ENCODE measurements at regions of chr9 and their contacts with region 1.

Region 1: GRCh38 chr9:105425841-105426436 is 21.9 kb upstream of the FSD1L start:
- DNase-seq: peak in 1 of 4 experiments; percentile 37
- ATAC-seq: peak; percentile 91
- H3K4me3 ChIP-seq: no peak overlapping the region
- H3K27ac ChIP-seq: no peak overlapping the region
- H3K4me1 ChIP-seq: no peaks in the 10 kb centered on the region
- H3K27me3 ChIP-seq: peaks cover 9 to 14% of the 10 kb centered on the region in 2 experiments; a peak in 4 of 5 replicates
- CTCF ChIP-seq: peak; percentile 26 to 75 (median 31); a peak in 3 of 6 replicates
- EP300 ChIP-seq: no peak
- POLR2A ChIP-seq: no peak
- RAD21 ChIP-seq: peak; percentile 58 to 86

Region 2: GRCh38 chr9:105342145-105342505 is 83.8 kb before region 1 on chr9:
- CTCF ChIA-PET with region 1: no interaction called
- POLR2A ChIA-PET with region 1: no interaction called
- in situ Hi-C with region 1: no loop called
- intact Hi-C with region 1: no loop called
- DNase-seq: no peak
- ATAC-seq: no peak
- H3K4me3 ChIP-seq: no peak overlapping the region
- H3K27ac ChIP-seq: no peak overlapping the region
- H3K4me1 ChIP-seq: no peaks in the 10 kb centered on the region
- H3K27me3 ChIP-seq: no peaks in the 10 kb centered on the region
- CTCF ChIP-seq: no peak
- EP300 ChIP-seq: no peak
- POLR2A ChIP-seq: no peak
- RAD21 ChIP-seq: no peak

Region 3: DNA sequence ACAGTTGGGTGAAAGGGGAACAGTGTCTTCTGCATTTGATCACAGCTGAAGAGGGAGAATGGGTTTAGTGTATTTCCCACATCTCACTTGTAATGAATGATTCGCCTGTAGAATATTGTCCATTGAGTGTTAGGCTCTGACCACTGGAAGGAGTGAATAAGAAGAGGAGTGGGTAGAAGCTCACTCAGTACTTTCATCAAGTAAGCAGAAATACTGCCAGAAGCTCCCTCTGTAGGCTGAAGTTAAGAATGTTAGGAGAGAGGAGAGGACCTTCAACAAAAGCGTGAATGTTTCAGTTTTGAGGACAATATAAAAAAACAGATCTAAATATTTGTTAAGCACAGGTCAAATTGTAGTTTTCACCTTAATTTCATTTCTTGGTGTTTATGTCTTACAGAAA is 49.4 kb after region 1 on chr9:
- CTCF ChIA-PET with region 1: interaction called, 3 read pairs
- POLR2A ChIA-PET with region 1: no interaction called
- in situ Hi-C with region 1: no loop called
- intact Hi-C with region 1: loop called (anchors 1 kb)
- DNase-seq: peak in 1 of 4 experiments; percentile 21
- ATAC-seq: peak; percentile 84
- H3K4me3 ChIP-seq: no peak overlapping the region
- H3K27ac ChIP-seq: no peak overlapping the region
- H3K4me1 ChIP-seq: no peaks in the 10 kb centered on the region
- H3K27me3 ChIP-seq: no peaks in the 10 kb centered on the region
- CTCF ChIP-seq: peak in 1 of 3 experiments; percentile 37; a peak in 3 of 6 replicates
- EP300 ChIP-seq: no peak
- POLR2A ChIP-seq: no peak
- RAD21 ChIP-seq: peak in 1 of 2 experiments; percentile 38; a peak in 2 of 4 replicates

Region 4: GRCh38 chr9:105535920-105536668 is 110.2 kb after region 1 on chr9:
- CTCF ChIA-PET with region 1: no interaction called
- POLR2A ChIA-PET with region 1: no interaction called
- in situ Hi-C with region 1: no loop called
- intact Hi-C with region 1: loop called (anchors 5 kb)
- DNase-seq: no peak
- ATAC-seq: no peak
- H3K4me3 ChIP-seq: no peak overlapping the region
- H3K27ac ChIP-seq: no peak overlapping the region
- H3K4me1 ChIP-seq: no peaks in the 10 kb centered on the region
- H3K27me3 ChIP-seq: no peaks in the 10 kb centered on the region
- CTCF ChIP-seq: no peak
- EP300 ChIP-seq: no peak
- POLR2A ChIP-seq: no peak
- RAD21 ChIP-seq: no peak

Region 5: DNA sequence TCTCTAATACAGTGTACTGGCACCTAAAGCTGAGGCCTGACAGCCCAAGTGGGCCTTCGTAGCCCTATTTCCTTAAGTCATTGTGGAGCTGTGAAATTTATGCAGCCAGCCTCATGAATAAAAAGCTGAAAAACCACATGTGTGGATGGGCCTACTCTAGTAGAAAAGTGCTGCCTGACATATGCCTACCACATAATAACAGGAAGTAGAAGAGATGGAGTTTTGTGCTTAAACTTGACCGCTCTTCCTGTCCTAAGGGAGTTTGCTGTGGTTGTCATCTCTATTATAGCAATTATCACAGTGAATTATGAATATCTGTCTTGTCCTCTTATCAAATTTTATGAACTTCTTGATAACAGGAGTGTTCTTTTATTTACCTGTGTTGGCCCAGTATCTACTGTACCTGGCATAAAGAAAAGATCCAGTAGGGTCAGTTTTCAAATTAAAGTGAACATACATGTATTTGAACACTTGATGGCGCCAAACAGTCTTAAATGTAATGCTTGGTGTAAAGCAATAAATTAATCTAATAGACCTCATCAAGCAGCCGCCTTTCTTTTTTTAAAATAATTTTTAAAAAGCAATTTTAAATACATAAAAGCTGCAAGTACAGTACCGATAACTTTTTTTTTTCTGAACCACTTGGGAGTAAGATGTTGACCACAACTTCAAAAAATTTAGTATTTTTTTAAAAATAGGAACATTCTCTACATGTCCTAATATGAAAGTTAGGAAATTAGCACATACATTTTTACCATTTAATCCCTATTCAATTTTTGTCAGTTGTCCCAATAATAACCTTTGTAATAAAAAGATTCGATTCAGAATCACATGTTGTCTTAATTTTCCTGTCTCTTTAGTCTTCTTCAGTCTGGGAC is 183.0 kb after region 1 on chr9:
- CTCF ChIA-PET with region 1: no interaction called
- POLR2A ChIA-PET with region 1: no interaction called
- in situ Hi-C with region 1: no loop called
- intact Hi-C with region 1: loop called (anchors 5 kb)
- DNase-seq: peak; percentile 44 to 69 (median 52)
- ATAC-seq: peak; percentile 88
- H3K4me3 ChIP-seq: no peak overlapping the region
- H3K27ac ChIP-seq: no peak overlapping the region
- H3K4me1 ChIP-seq: no peaks in the 10 kb centered on the region
- H3K27me3 ChIP-seq: no peaks in the 10 kb centered on the region
- CTCF ChIP-seq: peak; percentile 34 to 78 (median 59); a peak in 4 of 6 replicates
- EP300 ChIP-seq: no peak
- POLR2A ChIP-seq: no peak
- RAD21 ChIP-seq: peak; percentile 84 to 85

Region 6: DNA sequence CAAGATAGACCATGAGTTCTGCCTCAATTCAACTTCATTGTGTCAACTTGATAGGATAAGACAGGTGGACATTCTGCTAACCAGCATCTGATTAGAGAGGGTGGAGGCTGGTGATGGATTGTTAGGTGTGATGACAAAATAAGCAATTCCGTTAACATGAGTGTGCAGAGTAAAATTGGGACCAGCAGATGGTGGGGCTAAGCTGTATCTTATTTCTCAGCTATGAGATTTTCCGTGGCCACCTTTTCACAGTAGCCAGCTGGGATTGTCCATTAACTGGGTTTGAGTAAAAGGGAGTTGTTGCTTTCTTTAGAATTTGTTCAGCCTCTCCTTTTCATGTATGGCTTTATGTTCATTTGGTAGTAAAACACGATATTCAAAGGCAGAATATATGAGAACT is 207.5 kb after region 1 on chr9:
- CTCF ChIA-PET with region 1: no interaction called
- POLR2A ChIA-PET with region 1: no interaction called
- in situ Hi-C with region 1: no loop called
- intact Hi-C with region 1: no loop called
- DNase-seq: no peak
- ATAC-seq: peak; percentile 63
- H3K4me3 ChIP-seq: no peak overlapping the region
- H3K27ac ChIP-seq: no peak overlapping the region
- H3K4me1 ChIP-seq: no peaks in the 10 kb centered on the region
- H3K27me3 ChIP-seq: no peaks in the 10 kb centered on the region
- CTCF ChIP-seq: peak in 1 of 3 experiments; percentile 24; a peak in 2 of 6 replicates
- EP300 ChIP-seq: no peak
- POLR2A ChIP-seq: no peak
- RAD21 ChIP-seq: no peak; a peak in 1 of 4 replicates

Region 7: DNA sequence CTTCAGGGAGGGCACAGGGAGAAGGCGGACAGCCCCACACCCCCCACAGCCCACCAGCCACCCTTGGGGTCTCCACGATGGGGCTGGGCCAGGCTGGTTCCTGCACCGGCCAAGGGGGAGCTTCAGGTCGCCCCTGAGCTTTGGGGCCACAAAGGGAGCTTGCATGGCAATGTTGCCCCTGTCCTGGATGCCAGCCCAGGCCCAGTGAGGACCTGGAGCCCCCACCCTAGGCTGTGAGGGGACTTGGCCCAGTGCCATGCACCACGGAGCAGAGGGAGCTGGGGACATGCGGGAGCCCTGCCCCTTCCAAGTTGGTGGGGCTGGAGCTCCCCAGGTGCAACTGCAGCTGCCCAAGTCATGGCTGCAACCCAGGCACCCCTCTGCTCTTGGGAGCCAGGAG is 286.8 kb after region 1 on chr9:
- CTCF ChIA-PET with region 1: no interaction called
- POLR2A ChIA-PET with region 1: interaction called, 3 read pairs
- in situ Hi-C with region 1: no loop called
- intact Hi-C with region 1: loop called (anchors 5 kb)
- DNase-seq: no peak
- ATAC-seq: no peak
- H3K4me3 ChIP-seq: no peak overlapping the region
- H3K27ac ChIP-seq: no peak overlapping the region
- H3K4me1 ChIP-seq: peaks cover 0 to 14% of the 10 kb centered on the region in 2 experiments; a peak in 1 of 5 replicates
- H3K27me3 ChIP-seq: no peaks in the 10 kb centered on the region
- CTCF ChIP-seq: no peak
- EP300 ChIP-seq: no peak
- POLR2A ChIP-seq: no peak
- RAD21 ChIP-seq: no peak

Region 8: DNA sequence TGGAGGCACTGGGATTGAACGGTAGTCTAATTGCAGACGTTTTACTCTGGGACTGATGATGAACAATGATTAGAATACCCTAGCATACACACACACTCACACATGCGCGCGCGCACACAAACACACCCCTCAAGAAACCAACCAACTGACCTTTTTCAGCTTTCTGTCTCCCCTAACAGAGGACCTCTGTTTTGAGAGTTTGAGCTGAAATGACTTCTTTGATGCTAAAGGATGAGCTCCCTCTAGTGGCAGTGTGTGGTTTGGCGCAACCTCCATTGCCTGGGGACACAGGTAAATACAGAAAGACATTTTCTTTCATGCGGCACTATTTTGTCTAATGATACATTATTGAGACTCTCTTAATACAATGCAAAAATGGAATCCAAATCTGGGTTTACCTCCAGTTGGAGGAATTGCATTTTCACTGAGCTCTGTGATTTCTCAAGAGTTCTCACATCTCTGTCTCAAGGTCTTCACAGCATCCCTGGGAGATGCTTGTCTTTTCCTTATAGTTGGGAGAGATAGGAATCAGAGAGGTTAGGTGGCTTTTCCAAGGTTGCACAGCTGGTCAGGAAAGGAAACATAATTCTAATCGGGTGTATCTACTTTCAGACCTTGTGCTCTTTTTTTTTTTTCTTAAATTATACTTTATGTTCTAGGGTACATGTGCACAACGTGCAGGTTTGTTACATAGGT is 455.9 kb after region 1 on chr9:
- CTCF ChIA-PET with region 1: no interaction called
- POLR2A ChIA-PET with region 1: no interaction called
- in situ Hi-C with region 1: no loop called
- intact Hi-C with region 1: loop called (anchors 1 kb)
- DNase-seq: peak; percentile 58 to 81 (median 62)
- ATAC-seq: peak; percentile 90
- H3K4me3 ChIP-seq: no peak overlapping the region
- H3K27ac ChIP-seq: no peak overlapping the region
- H3K4me1 ChIP-seq: peaks cover 0 to 14% of the 10 kb centered on the region in 2 experiments; a peak in 4 of 5 replicates
- H3K27me3 ChIP-seq: no peaks in the 10 kb centered on the region
- CTCF ChIP-seq: peak; percentile 78 to 93 (median 89)
- EP300 ChIP-seq: no peak
- POLR2A ChIP-seq: no peak
- RAD21 ChIP-seq: peak; percentile 80 to 92

Measured in K562 (cell line).